CD4-positive, alpha-beta memory T cell (primary cell): ENCODE measurements at regions of chr17 and their contacts with region 1.

Region 1: DNA sequence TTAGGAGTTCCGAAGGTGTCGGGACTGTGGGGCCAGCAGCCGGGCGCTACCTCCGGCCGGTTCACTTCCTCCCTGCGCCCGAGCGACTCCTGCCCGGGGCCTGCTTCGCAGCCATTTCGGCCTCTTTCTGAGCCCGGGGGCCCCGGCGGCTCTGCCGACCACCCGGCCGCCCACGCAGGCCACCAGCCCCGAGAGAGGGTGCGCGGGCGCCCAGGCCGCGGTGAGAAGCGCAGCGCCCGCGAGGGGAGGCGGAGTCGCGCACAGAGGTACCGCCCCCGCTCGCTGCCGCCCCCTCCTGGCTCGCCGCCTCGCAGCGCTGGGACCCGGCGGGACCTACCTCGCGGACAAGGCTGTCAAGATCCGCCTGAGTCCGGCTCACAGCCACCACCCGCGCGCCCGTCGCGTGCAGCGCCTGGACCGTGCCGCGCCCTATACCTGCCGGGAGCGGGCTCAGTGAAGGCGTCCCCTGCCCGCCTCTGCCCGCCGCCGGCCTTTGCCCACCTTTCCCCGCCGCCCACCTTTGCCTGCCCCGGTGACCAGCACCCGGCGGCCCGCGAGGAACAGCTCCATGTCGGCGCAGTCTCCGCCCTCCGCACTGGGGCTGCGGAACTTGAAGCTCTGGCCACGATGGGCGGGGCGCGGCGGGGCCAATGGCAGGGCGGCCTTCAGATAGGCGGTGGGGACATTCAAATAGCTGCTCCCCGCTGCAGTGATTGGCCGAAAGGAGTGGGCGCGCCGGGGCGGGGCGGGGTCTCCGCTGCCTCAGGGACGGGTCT is at the start of gene DCXR:
- DNase-seq: peak; percentile 95 to 96 (median 95)
- H3K4me3 ChIP-seq: peak within 1 kb of the TSS; percentile 52 to 80
- H3K4me3 Mint-ChIP-seq: peak within 1 kb of the TSS; percentile 87 to 95 (median 90)
- H3K27ac ChIP-seq: peak within 1 kb of the TSS; percentile 57
- H3K27ac Mint-ChIP-seq: peak within 1 kb of the TSS; percentile 87 to 96 (median 93)
- H3K4me1 ChIP-seq: peaks cover 19% of the 10 kb centered on the region
- H3K4me1 Mint-ChIP-seq: peaks cover 13 to 36% (median 18%) of the 10 kb centered on the region in 4 donors
- H3K27me3 ChIP-seq: no peaks in the 10 kb centered on the region
- H3K27me3 Mint-ChIP-seq: no peaks in the 10 kb centered on the region
- total RNA-seq, gene DCXR: 65.9 to 68.2 TPM

Region 2: DNA sequence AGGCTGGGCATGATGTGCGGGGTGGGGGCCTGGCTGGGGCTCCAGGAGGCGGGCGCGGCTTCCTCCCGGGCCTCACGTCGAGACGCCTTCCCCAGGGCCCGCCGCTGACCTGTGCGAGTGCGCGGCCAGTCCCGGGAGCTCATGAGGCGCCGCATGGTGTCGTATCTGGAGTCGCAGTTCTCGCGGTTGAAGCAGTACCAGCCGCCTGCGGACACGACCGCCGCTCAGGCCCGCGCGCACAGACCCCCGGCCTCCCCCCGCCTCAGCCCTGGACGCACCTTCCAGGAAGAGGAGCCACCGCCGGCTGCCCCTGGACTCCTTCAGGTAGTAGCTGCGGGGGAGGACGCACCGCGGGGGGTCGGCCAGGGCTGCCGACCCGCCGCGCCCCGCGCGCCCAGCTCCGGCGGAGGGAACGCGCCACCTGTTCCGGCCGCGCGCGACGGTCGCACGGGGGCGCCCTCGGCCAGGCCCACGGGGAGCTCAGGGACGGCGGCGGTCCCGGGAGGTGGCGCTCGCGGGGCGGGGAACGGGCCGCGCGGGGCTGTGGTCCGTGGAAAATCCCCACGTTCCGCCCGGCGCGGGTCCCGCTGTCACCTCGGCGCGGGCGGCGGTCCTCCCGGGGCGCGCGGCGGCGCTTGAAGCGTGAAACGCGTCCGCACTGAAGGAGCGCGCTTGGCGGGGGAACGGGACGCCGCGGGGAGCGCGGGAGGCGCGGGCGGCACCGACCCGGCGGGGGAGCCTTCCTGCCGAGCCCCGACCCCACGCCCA is 77.8 kb before region 1 on chr17:
- CTCF ChIA-PET with region 1: interaction called, 11 read pairs
- POLR2A ChIA-PET with region 1: interaction called, 12 read pairs
- intact Hi-C with region 1: loop called (anchors 5 kb)
- DNase-seq: peak; percentile 76 to 88 (median 84)
- H3K4me3 ChIP-seq: peak overlapping the region in 1 of 2 donors; percentile 37
- H3K4me3 Mint-ChIP-seq: peak overlapping the region in 4 of 8 donors; percentile 45 to 66 (median 58)
- H3K27ac ChIP-seq: no peak overlapping the region
- H3K27ac Mint-ChIP-seq: peak overlapping the region in 1 of 7 donors; percentile 69
- H3K4me1 ChIP-seq: peaks cover 7% of the 10 kb centered on the region
- H3K4me1 Mint-ChIP-seq: peaks cover 0 to 3% (median 0%) of the 10 kb centered on the region in 4 donors
- H3K27me3 ChIP-seq: peaks cover 30% of the 10 kb centered on the region
- H3K27me3 Mint-ChIP-seq: peaks cover 2 to 12% of the 10 kb centered on the region in 2 donors

Region 3: DNA sequence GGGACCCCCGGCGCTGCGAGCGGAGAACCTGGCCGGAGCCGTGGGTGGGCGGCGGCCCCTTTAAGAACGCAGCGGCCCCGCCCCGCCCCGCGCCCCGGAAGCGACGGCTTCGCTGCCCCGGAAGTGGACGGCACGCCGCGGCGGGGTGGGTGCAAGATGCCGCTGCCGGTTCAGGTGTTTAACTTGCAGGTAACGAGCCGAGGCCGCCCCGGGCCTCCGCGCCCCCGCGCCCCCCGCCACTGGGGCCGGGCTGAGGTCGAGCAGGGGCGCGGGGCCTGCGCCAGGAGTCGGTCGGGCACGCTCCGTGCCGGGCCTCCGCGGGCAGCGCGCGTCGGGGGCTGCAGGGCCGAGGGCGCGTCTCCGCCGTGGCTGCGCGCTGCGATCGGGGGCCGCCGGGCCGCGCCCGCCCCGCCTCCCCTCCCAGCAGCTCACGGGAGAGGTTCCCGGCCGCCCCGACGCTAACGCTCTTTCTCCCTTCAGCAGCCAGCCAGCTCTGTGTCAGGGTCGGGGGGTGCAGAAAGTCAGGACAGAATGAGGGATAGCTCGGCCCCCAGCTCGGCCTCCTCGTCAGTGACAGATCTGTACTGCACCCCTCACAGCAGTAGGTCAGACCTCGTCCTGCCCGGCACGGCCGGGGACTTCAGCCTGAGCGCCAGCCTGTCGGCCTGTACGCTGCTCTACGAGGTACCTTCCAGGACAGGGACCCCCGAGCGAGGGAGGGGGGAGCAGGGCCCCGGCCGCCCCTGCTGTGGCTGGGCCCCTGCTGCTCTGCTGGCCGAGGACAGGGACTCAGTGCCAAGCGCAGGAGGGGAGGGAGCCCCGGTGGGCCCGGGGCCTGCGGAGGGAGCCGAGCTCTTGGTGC is 14.7 kb after region 1 on chr17 and contains the starts of genes GPS1 and RFNG:
- CTCF ChIA-PET with region 1: interaction called, 11 read pairs
- POLR2A ChIA-PET with region 1: interaction called, 26 read pairs
- intact Hi-C with region 1: loop called (anchors 1 kb)
- DNase-seq: peak; percentile 77 to 79 (median 78)
- H3K4me3 ChIP-seq: peak within 1 kb of the TSS; percentile 29 to 69
- H3K4me3 Mint-ChIP-seq: peak within 1 kb of the TSS; percentile 79 to 91 (median 84)
- H3K27ac ChIP-seq: peak within 1 kb of the TSS; percentile 55
- H3K27ac Mint-ChIP-seq: peak within 1 kb of the TSS; percentile 38 to 91 (median 87)
- H3K4me1 ChIP-seq: peaks cover 31% of the 10 kb centered on the region
- H3K4me1 Mint-ChIP-seq: peaks cover 3 to 22% (median 11%) of the 10 kb centered on the region in 4 donors
- H3K27me3 ChIP-seq: no peaks in the 10 kb centered on the region
- H3K27me3 Mint-ChIP-seq: no peaks in the 10 kb centered on the region
- total RNA-seq, gene GPS1: 85.1 to 89.0 TPM
- total RNA-seq, gene RFNG: 37.6 to 44.0 TPM

Region 4: GRCh38 chr17:82065638-82066303 is 28.5 kb after region 1 on chr17 and contains the start of gene DUS1L:
- CTCF ChIA-PET with region 1: interaction called, 5 read pairs
- POLR2A ChIA-PET with region 1: interaction called, 21 read pairs
- intact Hi-C with region 1: loop called (anchors 2 kb)
- DNase-seq: peak; percentile 44 to 78 (median 70)
- H3K4me3 ChIP-seq: peak within 1 kb of the TSS; percentile 42 to 73
- H3K4me3 Mint-ChIP-seq: peak within 1 kb of the TSS; percentile 81 to 89 (median 86)
- H3K27ac ChIP-seq: peak within 1 kb of the TSS; percentile 66
- H3K27ac Mint-ChIP-seq: peak within 1 kb of the TSS; percentile 91 to 97 (median 94)
- H3K4me1 ChIP-seq: peaks cover 28% of the 10 kb centered on the region
- H3K4me1 Mint-ChIP-seq: peaks cover 0 to 23% (median 12%) of the 10 kb centered on the region in 4 donors
- H3K27me3 ChIP-seq: no peaks in the 10 kb centered on the region
- H3K27me3 Mint-ChIP-seq: no peaks in the 10 kb centered on the region
- total RNA-seq, gene DUS1L: 139 to 141 TPM

Region 5: GRCh38 chr17:82126556-82127314 is 89.4 kb after region 1 on chr17:
- CTCF ChIA-PET with region 1: interaction called, 3 read pairs
- POLR2A ChIA-PET with region 1: interaction called, 5 read pairs
- intact Hi-C with region 1: loop called (anchors 1 kb)
- DNase-seq: peak; percentile 96 to 98 (median 97)
- H3K4me3 ChIP-seq: peak overlapping the region in 1 of 2 donors; percentile 45
- H3K4me3 Mint-ChIP-seq: peak overlapping the region; percentile 74 to 87 (median 82)
- H3K27ac ChIP-seq: peak overlapping the region; percentile 77
- H3K27ac Mint-ChIP-seq: peak overlapping the region; percentile 91 to 100 (median 99)
- H3K4me1 ChIP-seq: peaks cover 66% of the 10 kb centered on the region
- H3K4me1 Mint-ChIP-seq: peaks cover 27 to 70% (median 51%) of the 10 kb centered on the region in 4 donors
- H3K27me3 ChIP-seq: no peaks in the 10 kb centered on the region
- H3K27me3 Mint-ChIP-seq: no peaks in the 10 kb centered on the region

Region 6: GRCh38 chr17:82230627-82231311 is 193.5 kb after region 1 on chr17:
- CTCF ChIA-PET with region 1: no interaction called
- POLR2A ChIA-PET with region 1: interaction called, 3 read pairs
- intact Hi-C with region 1: loop called (anchors 10 kb)
- DNase-seq: peak; percentile 42 to 76 (median 48)
- H3K4me3 ChIP-seq: peak overlapping the region in 1 of 2 donors; percentile 32
- H3K4me3 Mint-ChIP-seq: peak overlapping the region in 5 of 8 donors; percentile 17 to 84 (median 77)
- H3K27ac ChIP-seq: peak overlapping the region; percentile 38
- H3K27ac Mint-ChIP-seq: no peak overlapping the region
- H3K4me1 ChIP-seq: peaks cover 42% of the 10 kb centered on the region
- H3K4me1 Mint-ChIP-seq: peaks cover 2 to 37% (median 15%) of the 10 kb centered on the region in 4 donors
- H3K27me3 ChIP-seq: no peaks in the 10 kb centered on the region
- H3K27me3 Mint-ChIP-seq: no peaks in the 10 kb centered on the region